Activated CD8-positive, alpha-beta T cell treated with anti-CD3 and anti-CD28 coated beads for 36 hours (primary cell): ENCODE measurements at regions of chr11 and their contacts with region 1.

Region 1: DNA sequence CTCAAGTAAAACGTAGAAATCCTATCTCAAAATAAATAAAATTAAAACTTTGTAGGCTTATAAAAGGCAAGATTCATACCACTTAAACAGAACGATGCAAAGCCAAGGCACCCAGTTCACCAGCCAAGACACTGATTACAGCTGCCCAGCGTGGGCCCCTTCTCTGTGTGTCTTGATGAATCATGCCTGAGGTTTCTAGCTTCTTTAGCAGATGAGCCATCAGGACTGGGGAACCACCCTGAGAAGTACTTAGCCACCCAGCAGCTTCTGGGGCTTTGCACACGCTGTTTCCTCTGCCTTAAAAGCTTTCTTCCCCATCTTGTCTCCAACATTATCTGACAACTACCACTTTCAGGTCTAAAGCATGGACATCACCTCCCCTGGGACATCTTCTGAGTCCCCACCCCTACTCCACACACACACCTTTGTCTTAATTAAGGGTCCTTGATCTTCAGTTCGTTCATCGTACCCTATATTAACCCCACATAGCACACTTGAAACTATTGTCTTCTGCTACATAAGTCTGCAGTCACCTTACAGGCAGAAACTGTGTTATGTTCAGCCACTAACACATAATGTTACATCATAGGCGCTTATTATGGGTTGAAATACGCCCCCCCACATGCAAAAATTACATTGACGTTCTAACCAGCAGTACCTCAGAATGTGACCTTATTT is 8.7 kb upstream of the LAYN start:
- DNase-seq: peak; percentile 92
- ATAC-seq: peak; percentile 93
- H3K4me3 Mint-ChIP-seq: peak overlapping the region; percentile 57
- H3K27ac Mint-ChIP-seq: peak overlapping the region; percentile 98
- H3K4me1 Mint-ChIP-seq: peaks cover 58% of the 10 kb centered on the region
- H3K27me3 Mint-ChIP-seq: peaks cover 8% of the 10 kb centered on the region
- CTCF ChIP-seq: no peak

Region 2: DNA sequence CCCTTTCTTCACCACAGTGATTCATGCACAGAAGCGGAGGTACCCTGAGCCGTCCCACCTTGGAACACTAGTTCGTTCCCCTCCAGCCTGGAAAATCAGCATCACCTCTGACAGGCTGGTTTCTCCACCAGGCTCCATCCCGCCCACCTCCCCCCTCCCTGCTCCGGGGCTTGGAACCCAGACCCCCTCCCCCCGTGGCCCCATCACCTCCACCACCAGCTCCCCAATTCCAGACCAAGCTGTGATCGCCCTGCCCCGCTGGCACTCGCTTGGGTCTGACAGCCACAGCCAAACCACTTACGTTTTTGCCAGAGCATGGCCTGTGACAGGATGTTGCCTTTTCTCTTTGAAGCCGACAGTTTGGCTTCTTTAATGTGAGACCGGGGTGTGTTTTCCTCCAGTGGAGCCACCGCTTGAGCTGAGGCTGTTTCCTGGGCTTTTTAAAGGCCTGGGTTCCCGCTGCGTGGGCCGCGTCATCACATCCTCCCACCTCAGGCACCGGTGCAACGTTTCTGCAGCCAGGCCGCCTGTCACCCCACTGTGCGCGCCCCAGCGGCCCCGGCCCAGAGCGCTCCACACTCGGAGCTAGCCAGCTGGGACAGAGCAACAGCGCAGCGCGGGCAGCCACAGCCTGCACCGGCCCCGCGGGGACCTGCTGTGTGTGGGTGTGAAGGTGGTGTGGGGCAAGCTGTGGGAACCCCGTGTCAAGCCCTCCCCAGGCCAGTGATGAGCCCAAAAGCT is 152.8 kb before region 1 on chr11 and contains the start of gene POU2AF1:
- CTCF ChIA-PET with region 1: no interaction called
- POLR2A ChIA-PET with region 1: interaction called, 3 read pairs
- intact Hi-C with region 1: loop called (anchors 5 kb)
- DNase-seq: peak; percentile 91
- ATAC-seq: peak; percentile 76
- H3K4me3 Mint-ChIP-seq: peak within 1 kb of the TSS; percentile 70
- H3K27ac Mint-ChIP-seq: peak within 1 kb of the TSS; percentile 97
- H3K4me1 Mint-ChIP-seq: peaks cover 63% of the 10 kb centered on the region
- H3K27me3 Mint-ChIP-seq: no peaks in the 10 kb centered on the region
- CTCF ChIP-seq: no peak
- total RNA-seq, gene POU2AF1: 3.6 to 4.5 TPM